Caco-2 (cell line): ENCODE measurements at regions of chr19 and their contacts with region 1.

Region 1: GRCh38 chr19:12763100-12763499 is 11.5 kb downstream of the BEST2 start:
- DNase-seq: no peak
- H3K4me3 ChIP-seq: no peak overlapping the region
- H3K4me3 Mint-ChIP-seq: no peak overlapping the region
- H3K27ac Mint-ChIP-seq: no peak overlapping the region
- H3K4me1 ChIP-seq: no peaks in the 10 kb centered on the region; the same call in 1 of the 2 replicates
- H3K4me1 Mint-ChIP-seq: no peaks in the 10 kb centered on the region
- H3K27me3 ChIP-seq: no peaks in the 10 kb centered on the region
- H3K27me3 Mint-ChIP-seq: no peaks in the 10 kb centered on the region
- CTCF ChIP-seq: no peak

Region 2: DNA sequence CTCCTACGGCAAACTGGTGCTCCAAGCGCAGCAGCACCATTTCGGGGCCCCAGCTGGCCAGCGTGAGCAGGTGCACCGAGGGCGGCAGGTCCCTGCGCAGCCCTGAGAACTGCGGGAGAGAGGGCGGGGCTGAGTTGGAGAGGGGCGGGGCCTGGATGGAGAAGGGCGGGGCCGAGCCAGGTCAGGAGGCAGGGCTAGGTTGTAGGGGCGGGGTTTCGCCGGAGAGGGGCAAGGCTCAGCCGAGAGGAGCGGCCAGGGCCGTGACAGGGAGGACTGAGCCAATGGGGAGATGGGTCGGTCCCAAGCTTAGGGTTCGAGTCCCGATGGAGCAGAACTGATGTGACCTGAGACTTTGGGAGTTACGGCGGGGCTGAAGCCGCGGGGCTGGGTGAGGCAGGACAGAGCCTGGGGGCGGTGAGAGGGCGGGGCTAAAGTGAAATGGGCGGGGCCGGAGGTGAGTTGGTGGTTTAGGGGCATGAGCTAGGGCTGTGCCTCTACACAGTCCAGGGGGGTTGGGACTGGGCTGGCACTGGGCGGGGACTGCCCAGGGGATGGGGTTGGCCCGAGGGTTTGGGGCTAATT is 115.5 kb before region 1 on chr19:
- CTCF ChIA-PET with region 1: no interaction called
- POLR2A ChIA-PET with region 1: no interaction called
- intact Hi-C with region 1: no loop called
- DNase-seq: no peak
- H3K4me3 ChIP-seq: no peak overlapping the region
- H3K4me3 Mint-ChIP-seq: no peak overlapping the region
- H3K27ac Mint-ChIP-seq: peak overlapping the region; percentile 17
- H3K4me1 ChIP-seq: no peaks in the 10 kb centered on the region
- H3K4me1 Mint-ChIP-seq: no peaks in the 10 kb centered on the region
- H3K27me3 ChIP-seq: no peaks in the 10 kb centered on the region
- H3K27me3 Mint-ChIP-seq: no peaks in the 10 kb centered on the region
- CTCF ChIP-seq: no peak

Region 3: DNA sequence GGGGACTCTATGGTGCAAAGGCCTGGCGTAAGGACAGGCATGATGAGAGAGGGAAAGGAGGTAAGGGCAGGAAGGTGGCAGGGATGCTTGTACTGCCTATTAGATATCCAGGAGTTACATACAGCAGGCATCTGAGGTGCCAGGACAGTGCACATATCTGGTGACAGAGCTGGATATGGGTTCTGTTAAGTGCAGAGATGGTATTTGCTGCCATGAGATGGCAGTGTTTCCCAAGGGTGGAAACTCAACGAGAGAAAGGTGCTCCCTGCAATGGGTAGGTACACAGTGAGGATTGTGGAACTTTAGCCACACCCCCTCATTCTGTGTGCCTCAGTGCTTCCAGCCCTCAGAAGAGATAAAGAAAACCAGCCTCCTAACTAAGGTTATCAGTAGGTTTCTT is 46.2 kb before region 1 on chr19:
- CTCF ChIA-PET with region 1: interaction called, 6 read pairs
- POLR2A ChIA-PET with region 1: no interaction called
- intact Hi-C with region 1: loop called (anchors 1 kb)
- DNase-seq: peak; percentile 62 to 70
- H3K4me3 ChIP-seq: no peak overlapping the region
- H3K4me3 Mint-ChIP-seq: no peak overlapping the region
- H3K27ac Mint-ChIP-seq: no peak overlapping the region
- H3K4me1 ChIP-seq: 0 out of 2 replicates have a peak, but pooled peaks cover 8% of the 10 kb centered on the region
- H3K4me1 Mint-ChIP-seq: peaks cover 6% of the 10 kb centered on the region
- H3K27me3 ChIP-seq: no peaks in the 10 kb centered on the region
- H3K27me3 Mint-ChIP-seq: no peaks in the 10 kb centered on the region
- CTCF ChIP-seq: peak; percentile 27 to 33

Region 4: GRCh38 chr19:12789904-12790619 is 27.0 kb after region 1 on chr19:
- CTCF ChIA-PET with region 1: interaction called, 11 read pairs
- POLR2A ChIA-PET with region 1: interaction called, 6 read pairs
- intact Hi-C with region 1: no loop called
- DNase-seq: peak; percentile 95 to 96
- H3K4me3 ChIP-seq: peak overlapping the region; percentile 40
- H3K4me3 Mint-ChIP-seq: peak overlapping the region; percentile 92
- H3K27ac Mint-ChIP-seq: peak overlapping the region; percentile 83
- H3K4me1 ChIP-seq: peaks cover 25% of the 10 kb centered on the region
- H3K4me1 Mint-ChIP-seq: peaks cover 21% of the 10 kb centered on the region
- H3K27me3 ChIP-seq: no peaks in the 10 kb centered on the region
- H3K27me3 Mint-ChIP-seq: no peaks in the 10 kb centered on the region
- CTCF ChIP-seq: no peak

Region 5: GRCh38 chr19:12796146-12797071 is 33.3 kb after region 1 on chr19:
- CTCF ChIA-PET with region 1: interaction called, 11 read pairs
- POLR2A ChIA-PET with region 1: interaction called, 6 read pairs
- intact Hi-C with region 1: loop called (anchors 1 kb)
- DNase-seq: peak; percentile 81 to 83
- H3K4me3 ChIP-seq: no peak overlapping the region
- H3K4me3 Mint-ChIP-seq: peak overlapping the region; percentile 45
- H3K27ac Mint-ChIP-seq: peak overlapping the region; percentile 21
- H3K4me1 ChIP-seq: peaks cover 9% of the 10 kb centered on the region
- H3K4me1 Mint-ChIP-seq: peaks cover 5% of the 10 kb centered on the region
- H3K27me3 ChIP-seq: no peaks in the 10 kb centered on the region
- H3K27me3 Mint-ChIP-seq: no peaks in the 10 kb centered on the region
- CTCF ChIP-seq: peak; percentile 91

Region 6: GRCh38 chr19:12847159-12848139 is 84.3 kb after region 1 on chr19:
- CTCF ChIA-PET with region 1: interaction called, 15 read pairs
- POLR2A ChIA-PET with region 1: no interaction called
- intact Hi-C with region 1: loop called (anchors 5 kb)
- DNase-seq: peak; percentile 83 to 95
- H3K4me3 ChIP-seq: peak overlapping the region; percentile 25
- H3K4me3 Mint-ChIP-seq: peak overlapping the region; percentile 57
- H3K27ac Mint-ChIP-seq: no peak overlapping the region
- H3K4me1 ChIP-seq: no peaks in the 10 kb centered on the region
- H3K4me1 Mint-ChIP-seq: no peaks in the 10 kb centered on the region
- H3K27me3 ChIP-seq: no peaks in the 10 kb centered on the region; the same call in 1 of the 2 replicates
- H3K27me3 Mint-ChIP-seq: no peaks in the 10 kb centered on the region
- CTCF ChIP-seq: peak; percentile 81 to 98